ENCODE measurements at regions of chr9 and their contacts with region 1.

Region 1: GRCh38 chr9:36102742-36103495 is 33.6 kb upstream of the GLIPR2 start:
- DNase-seq: peak; percentile 39 to 92 (median 86)
- ATAC-seq: peak; percentile 99
- H3K4me3 ChIP-seq: no peak overlapping the region
- H3K27ac ChIP-seq: peak overlapping the region in 1 of 2 donors; percentile 0
- H3K4me1 ChIP-seq: peaks cover 0 to 13% of the 10 kb centered on the region in 2 donors
- H3K27me3 ChIP-seq: no peaks in the 10 kb centered on the region
- CTCF ChIP-seq: peak; percentile 82 to 89

Region 2: GRCh38 chr9:36166101-36166927 is 63.4 kb after region 1 on chr9:
- intact Hi-C with region 1: loop called in 1 of 2 experiments (anchors 5 kb)
- DNase-seq: peak; percentile 80 to 98 (median 84)
- ATAC-seq: peak; percentile 98
- H3K4me3 ChIP-seq: peak overlapping the region; percentile 40 to 45
- H3K27ac ChIP-seq: peak overlapping the region; percentile 53 to 79
- H3K4me1 ChIP-seq: peaks cover 9 to 31% of the 10 kb centered on the region in 2 donors
- H3K27me3 ChIP-seq: peaks cover 0 to 7% of the 10 kb centered on the region in 2 donors
- CTCF ChIP-seq: peak; percentile 90 to 97

Region 3: DNA sequence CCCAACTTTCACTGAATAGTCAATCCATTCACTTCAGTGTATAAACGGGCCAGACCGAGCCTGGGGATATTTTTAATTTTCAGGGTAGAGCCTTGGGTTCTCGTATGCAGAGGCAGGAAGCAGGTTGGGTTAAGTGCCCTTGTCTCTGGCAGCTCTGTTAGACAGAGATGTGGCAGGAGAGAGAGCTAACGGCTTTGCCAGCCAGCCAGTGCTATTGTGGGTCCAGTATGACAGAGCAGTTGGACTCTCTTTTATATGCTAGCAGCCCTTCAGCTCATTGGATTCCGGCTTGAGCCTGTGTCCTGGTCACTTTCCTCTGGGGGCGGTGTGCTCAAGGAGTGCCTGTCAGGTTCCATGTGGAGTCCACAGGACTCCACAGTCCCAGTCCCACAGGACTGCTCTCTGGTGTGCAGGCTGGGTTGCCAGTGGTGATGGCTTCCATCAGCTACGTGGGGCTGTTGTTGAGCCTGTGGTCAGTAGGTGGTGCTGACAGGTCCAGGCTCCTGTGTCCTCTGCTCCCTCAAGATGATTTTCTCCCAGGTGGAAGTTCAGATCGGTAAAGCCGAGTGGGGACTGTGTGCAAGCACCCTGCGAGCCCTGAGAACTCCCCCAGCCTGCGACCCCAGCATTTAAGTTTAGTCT is 102.1 kb after region 1 on chr9:
- intact Hi-C with region 1: no loop called
- DNase-seq: no peak
- ATAC-seq: peak; percentile 48
- H3K4me3 ChIP-seq: no peak overlapping the region
- H3K27ac ChIP-seq: no peak overlapping the region
- H3K4me1 ChIP-seq: peaks cover 7 to 28% of the 10 kb centered on the region in 2 donors
- H3K27me3 ChIP-seq: no peaks in the 10 kb centered on the region
- CTCF ChIP-seq: no peak

Measured in left lung (tissue), 14 donors.